CD8-positive, alpha-beta memory T cell (primary cell): ENCODE measurements at regions of chr14 and their contacts with region 1.

Region 1: GRCh38 chr14:56579345-56580220 is at the start of gene TMEM260:
- DNase-seq: peak; percentile 81 to 93 (median 89)
- H3K4me3 ChIP-seq: peak within 1 kb of the TSS; percentile 89
- H3K4me3 Mint-ChIP-seq: peak within 1 kb of the TSS; percentile 88 to 98 (median 94)
- H3K27ac ChIP-seq: peak within 1 kb of the TSS; percentile 84
- H3K27ac Mint-ChIP-seq: peak within 1 kb of the TSS; percentile 86 to 99 (median 96)
- H3K4me1 ChIP-seq: peaks cover 34% of the 10 kb centered on the region
- H3K4me1 Mint-ChIP-seq: peaks cover 42 to 49% (median 42%) of the 10 kb centered on the region in 3 donors
- H3K27me3 ChIP-seq: no peaks in the 10 kb centered on the region
- H3K27me3 Mint-ChIP-seq: peaks cover 0 to 3% of the 10 kb centered on the region in 2 donors
- total RNA-seq, gene TMEM260: 10.8 to 11.2 TPM

Region 2: DNA sequence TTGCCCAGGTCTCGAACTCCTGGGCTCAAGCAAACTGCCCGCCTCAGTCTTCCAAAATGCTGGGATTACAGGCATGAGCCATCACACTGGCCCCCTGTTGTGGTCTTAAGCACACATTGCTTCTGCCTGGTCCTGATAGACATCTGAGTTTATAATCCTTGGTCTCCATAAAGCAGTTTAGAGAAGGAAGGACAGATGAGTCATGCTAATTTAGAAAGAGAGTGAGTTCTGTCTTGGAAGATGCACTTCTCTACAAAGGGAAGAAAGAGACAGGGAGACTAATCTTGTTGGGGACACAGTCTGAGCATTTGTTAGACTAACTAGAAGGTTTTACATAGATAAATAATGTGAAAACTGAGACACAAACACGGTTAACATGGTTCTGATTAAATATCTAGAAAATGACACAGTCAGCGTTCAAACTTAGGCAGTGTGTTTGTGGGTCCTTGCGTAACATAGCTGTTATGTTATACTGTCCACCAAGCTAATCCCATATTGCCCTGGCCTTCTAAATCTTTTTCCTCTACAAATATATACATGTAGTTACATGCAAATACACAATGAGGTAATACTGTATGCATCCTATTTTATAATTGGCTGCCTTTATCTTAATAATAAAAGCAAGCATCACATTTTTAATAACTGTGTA is 1981.7 kb before region 1 on chr14:
- CTCF ChIA-PET with region 1: no interaction called
- POLR2A ChIA-PET with region 1: no interaction called
- DNase-seq: no peak
- H3K4me3 ChIP-seq: no peak overlapping the region
- H3K4me3 Mint-ChIP-seq: no peak overlapping the region
- H3K27ac ChIP-seq: no peak overlapping the region
- H3K27ac Mint-ChIP-seq: no peak overlapping the region
- H3K4me1 ChIP-seq: no peaks in the 10 kb centered on the region
- H3K4me1 Mint-ChIP-seq: peaks cover 0 to 2% (median 0%) of the 10 kb centered on the region in 3 donors
- H3K27me3 ChIP-seq: no peaks in the 10 kb centered on the region
- H3K27me3 Mint-ChIP-seq: peaks cover 14 to 41% of the 10 kb centered on the region in 2 donors

Region 3: DNA sequence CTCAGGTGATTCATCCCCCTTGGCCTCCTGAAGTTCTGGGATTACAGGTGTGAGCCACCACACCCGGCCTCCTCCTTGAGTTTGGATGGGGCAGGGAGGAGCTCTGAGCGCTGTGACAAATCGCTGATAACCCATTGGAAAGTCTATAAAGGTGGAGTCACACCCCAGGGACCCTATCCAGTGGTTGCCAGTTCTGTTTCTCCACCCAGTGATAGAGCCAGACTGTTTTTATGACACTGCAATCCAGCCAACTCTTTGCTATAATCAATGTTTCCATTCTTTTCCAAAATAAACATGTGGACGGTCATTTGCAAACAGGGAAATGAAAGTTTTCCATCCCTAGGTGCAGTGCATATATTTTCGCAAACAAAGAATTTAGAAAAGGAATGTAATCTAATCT is 603.4 kb before region 1 on chr14:
- CTCF ChIA-PET with region 1: no interaction called
- POLR2A ChIA-PET with region 1: no interaction called
- DNase-seq: no peak
- H3K4me3 ChIP-seq: no peak overlapping the region
- H3K4me3 Mint-ChIP-seq: no peak overlapping the region
- H3K27ac ChIP-seq: no peak overlapping the region
- H3K27ac Mint-ChIP-seq: no peak overlapping the region
- H3K4me1 ChIP-seq: no peaks in the 10 kb centered on the region
- H3K4me1 Mint-ChIP-seq: no peaks in the 10 kb centered on the region
- H3K27me3 ChIP-seq: no peaks in the 10 kb centered on the region
- H3K27me3 Mint-ChIP-seq: peaks cover under 1 to 7% of the 10 kb centered on the region in 2 donors

Region 4: GRCh38 chr14:56590535-56590960 is 11.0 kb after region 1 on chr14:
- CTCF ChIA-PET with region 1: interaction called, 24 read pairs
- POLR2A ChIA-PET with region 1: interaction called, 3 read pairs
- DNase-seq: no peak
- H3K4me3 ChIP-seq: no peak overlapping the region
- H3K4me3 Mint-ChIP-seq: no peak overlapping the region
- H3K27ac ChIP-seq: no peak overlapping the region
- H3K27ac Mint-ChIP-seq: no peak overlapping the region
- H3K4me1 ChIP-seq: no peaks in the 10 kb centered on the region
- H3K4me1 Mint-ChIP-seq: peaks cover 4 to 18% (median 9%) of the 10 kb centered on the region in 3 donors
- H3K27me3 ChIP-seq: no peaks in the 10 kb centered on the region
- H3K27me3 Mint-ChIP-seq: no peaks in the 10 kb centered on the region

Region 5: DNA sequence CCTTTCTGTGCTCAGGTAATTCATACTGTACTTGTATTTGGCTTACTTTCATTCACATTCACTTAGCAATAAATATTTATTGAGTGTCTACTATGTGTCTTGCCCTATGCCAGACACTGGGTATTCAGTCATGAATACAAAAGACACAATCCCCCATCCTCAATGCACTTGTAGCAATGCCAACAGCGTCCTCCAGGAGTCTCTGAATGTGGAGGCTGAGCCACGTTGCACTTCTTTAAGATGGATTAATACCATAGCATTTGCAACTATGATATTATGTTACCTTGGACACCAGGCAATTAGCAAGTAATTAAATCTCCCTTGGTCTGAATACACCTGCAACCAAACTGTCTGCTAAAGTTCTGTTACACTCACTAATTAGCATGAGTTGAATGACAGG is 171.9 kb after region 1 on chr14:
- CTCF ChIA-PET with region 1: no interaction called
- POLR2A ChIA-PET with region 1: no interaction called
- DNase-seq: no peak
- H3K4me3 ChIP-seq: no peak overlapping the region
- H3K4me3 Mint-ChIP-seq: no peak overlapping the region
- H3K27ac ChIP-seq: no peak overlapping the region
- H3K27ac Mint-ChIP-seq: no peak overlapping the region
- H3K4me1 ChIP-seq: no peaks in the 10 kb centered on the region
- H3K4me1 Mint-ChIP-seq: no peaks in the 10 kb centered on the region
- H3K27me3 ChIP-seq: no peaks in the 10 kb centered on the region
- H3K27me3 Mint-ChIP-seq: peaks cover 13 to 27% of the 10 kb centered on the region in 2 donors

Region 6: GRCh38 chr14:57268161-57269069 is 688.8 kb after region 1 on chr14 and contains the starts of genes AP5M1 and EXOC5:
- CTCF ChIA-PET with region 1: no interaction called
- POLR2A ChIA-PET with region 1: interaction called, 10 read pairs
- DNase-seq: peak; percentile 88 to 94 (median 93)
- H3K4me3 ChIP-seq: peak within 1 kb of the TSS; percentile 91
- H3K4me3 Mint-ChIP-seq: peak within 1 kb of the TSS; percentile 93 to 99 (median 98)
- H3K27ac ChIP-seq: peak within 1 kb of the TSS; percentile 97
- H3K27ac Mint-ChIP-seq: peak within 1 kb of the TSS; percentile 97 to 100 (median 99)
- H3K4me1 ChIP-seq: peaks cover 35% of the 10 kb centered on the region
- H3K4me1 Mint-ChIP-seq: peaks cover 66 to 85% (median 83%) of the 10 kb centered on the region in 3 donors
- H3K27me3 ChIP-seq: no peaks in the 10 kb centered on the region
- H3K27me3 Mint-ChIP-seq: no peaks in the 10 kb centered on the region
- total RNA-seq, gene AP5M1: 40.9 to 44.2 TPM
- total RNA-seq, gene EXOC5: 84.9 to 89.9 TPM